ENCODE measurements at regions of chr2 and their contacts with region 1.

Region 1: DNA sequence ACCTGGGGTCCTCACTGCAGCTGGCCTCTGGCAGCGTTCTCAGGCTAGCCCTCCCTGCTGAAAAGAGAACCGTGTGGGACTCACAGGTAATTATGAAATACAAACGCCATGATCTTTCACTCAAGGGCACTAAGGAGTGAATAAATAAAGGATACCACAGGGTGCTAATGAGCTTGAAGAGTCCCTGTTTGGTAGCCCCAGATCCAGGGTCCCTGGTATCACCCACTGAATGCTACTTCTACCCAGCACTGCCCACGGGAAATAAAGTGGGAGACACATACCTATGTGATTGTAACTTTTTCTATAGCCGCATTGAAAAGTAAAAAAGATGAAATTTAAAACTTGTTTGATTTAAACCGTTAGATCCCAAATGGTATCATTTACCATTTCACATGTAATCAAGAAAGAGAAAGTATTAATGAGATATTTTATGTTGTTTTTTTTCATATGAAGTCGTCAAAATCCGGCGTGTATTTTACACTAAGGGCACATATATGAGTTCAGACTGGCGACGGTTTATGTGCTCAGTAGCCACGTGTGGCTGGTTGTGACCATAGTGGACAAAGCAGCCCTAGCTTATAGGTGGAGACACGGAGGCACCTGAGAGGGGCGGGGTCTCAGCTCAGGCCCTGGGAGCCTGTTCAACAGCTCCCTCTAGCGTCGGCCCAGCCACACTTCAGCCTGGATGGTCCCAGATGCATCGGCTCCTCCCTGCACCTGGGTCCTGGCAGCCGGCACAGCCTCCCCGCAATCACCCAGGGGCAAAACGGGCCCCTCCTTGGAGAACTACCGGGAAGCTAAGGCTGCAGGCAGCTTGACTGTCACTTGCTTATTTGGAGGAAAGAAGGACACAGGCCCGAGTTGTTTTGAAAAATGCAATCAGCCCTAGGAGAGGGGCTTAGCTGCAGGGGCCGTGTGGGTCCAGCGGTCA is 39.2 kb downstream of the ODC1 start:
- DNase-seq: peak; percentile 89
- ATAC-seq: peak; percentile 79
- H3K4me3 Mint-ChIP-seq: peak overlapping the region; percentile 43
- H3K27ac Mint-ChIP-seq: peak overlapping the region; percentile 85
- H3K4me1 Mint-ChIP-seq: peaks cover 36% of the 10 kb centered on the region
- H3K27me3 Mint-ChIP-seq: no peaks in the 10 kb centered on the region

Region 2: GRCh38 chr2:10072656-10073480 is 336.0 kb before region 1 on chr2:
- CTCF ChIA-PET with region 1: interaction called, 37 read pairs
- DNase-seq: peak; percentile 86
- ATAC-seq: peak; percentile 95
- H3K4me3 Mint-ChIP-seq: no peak overlapping the region
- H3K27ac Mint-ChIP-seq: no peak overlapping the region
- H3K4me1 Mint-ChIP-seq: peaks cover 16% of the 10 kb centered on the region
- H3K27me3 Mint-ChIP-seq: peaks cover 51% of the 10 kb centered on the region

Region 3: DNA sequence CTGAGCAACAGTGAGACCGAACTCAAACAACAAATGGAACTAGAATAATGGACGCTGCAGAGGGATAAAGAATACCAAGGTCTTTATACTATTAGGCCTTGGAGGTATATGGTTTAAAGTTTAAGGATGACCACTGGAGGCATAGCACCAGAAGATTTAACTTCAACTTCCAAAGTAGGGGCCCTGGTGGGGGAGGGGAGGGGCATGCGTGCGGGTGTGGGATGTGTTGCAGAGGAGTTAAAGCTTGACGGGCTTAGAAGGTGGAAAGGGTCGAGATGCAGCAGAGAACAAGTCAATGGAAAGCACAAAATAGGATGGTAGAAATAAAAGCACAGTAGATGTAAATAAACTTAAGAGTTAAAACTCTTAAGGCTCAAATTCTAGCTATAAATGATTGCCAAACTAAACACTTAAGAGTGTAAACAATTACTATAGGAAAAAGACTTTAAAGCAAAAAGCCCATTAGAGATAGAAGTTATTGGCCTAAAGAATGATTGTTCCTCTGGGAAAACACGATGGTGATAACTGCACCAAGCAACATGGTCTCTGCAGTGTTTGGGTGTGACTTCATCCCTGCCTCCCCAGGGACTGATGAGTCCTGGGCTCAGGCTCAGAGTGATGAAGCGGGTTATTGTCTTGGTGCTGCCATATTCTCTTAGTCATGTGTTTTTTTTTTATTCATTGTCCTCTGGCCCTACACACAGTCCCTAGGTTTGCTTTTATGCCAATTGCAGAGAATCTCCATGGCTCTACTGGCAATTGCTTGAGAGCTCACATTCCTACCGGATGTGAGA is 273.4 kb before region 1 on chr2:
- CTCF ChIA-PET with region 1: interaction called, 36 read pairs
- DNase-seq: no peak
- ATAC-seq: no peak
- H3K4me3 Mint-ChIP-seq: no peak overlapping the region
- H3K27ac Mint-ChIP-seq: peak overlapping the region; percentile 56
- H3K4me1 Mint-ChIP-seq: peaks cover 32% of the 10 kb centered on the region
- H3K27me3 Mint-ChIP-seq: no peaks in the 10 kb centered on the region

Region 4: DNA sequence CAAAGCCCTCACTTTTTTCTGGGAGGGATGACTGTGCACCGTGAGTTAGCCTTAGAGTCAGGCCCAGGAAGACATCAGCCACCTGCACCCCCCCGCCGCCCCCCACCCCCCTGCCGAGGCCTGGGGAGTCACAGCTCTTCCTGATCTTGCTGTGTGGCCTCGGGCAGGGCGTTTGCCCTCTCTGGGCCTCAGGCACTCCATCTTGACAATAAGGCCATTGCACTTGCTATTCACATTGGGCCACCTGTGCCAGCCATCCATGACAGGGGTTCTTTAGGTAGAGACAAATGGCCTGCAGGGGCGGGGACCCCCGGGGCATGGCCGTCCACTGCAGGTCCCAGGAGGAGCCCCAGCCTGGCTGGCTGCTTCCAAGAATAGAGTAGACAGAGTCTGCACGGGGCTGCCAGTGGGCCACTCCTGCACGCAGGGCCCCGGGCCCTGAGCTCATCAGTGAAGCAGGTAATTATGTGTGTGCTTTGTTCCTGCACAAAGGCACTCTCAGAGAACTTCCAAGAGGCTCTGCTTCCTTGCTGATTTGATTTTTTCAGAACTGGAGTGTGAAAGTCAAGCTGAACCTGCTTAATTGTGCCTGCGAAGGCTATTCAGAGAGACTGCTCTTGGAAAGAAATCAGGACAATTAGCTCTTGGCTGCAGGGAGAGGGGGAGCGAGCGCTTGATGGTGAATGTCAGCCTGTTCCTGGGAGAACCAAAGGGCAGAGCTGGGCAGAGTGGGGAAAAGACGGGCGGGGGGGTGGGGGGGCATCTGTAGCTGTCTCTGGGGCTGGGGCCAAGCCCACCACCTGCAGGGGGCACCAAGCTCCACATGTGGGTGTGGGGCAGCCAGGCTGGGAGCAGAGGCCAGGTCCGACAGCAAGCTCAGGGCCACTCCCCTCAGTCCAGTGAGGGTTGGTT is 246.1 kb before region 1 on chr2:
- CTCF ChIA-PET with region 1: interaction called, 21 read pairs
- DNase-seq: no peak
- ATAC-seq: no peak
- H3K4me3 Mint-ChIP-seq: no peak overlapping the region
- H3K27ac Mint-ChIP-seq: no peak overlapping the region
- H3K4me1 Mint-ChIP-seq: peaks cover 20% of the 10 kb centered on the region
- H3K27me3 Mint-ChIP-seq: no peaks in the 10 kb centered on the region

Region 5: GRCh38 chr2:10278029-10278762 is 130.7 kb before region 1 on chr2:
- CTCF ChIA-PET with region 1: interaction called, 15 read pairs
- DNase-seq: peak; percentile 66
- ATAC-seq: peak; percentile 67
- H3K4me3 Mint-ChIP-seq: no peak overlapping the region
- H3K27ac Mint-ChIP-seq: peak overlapping the region; percentile 52
- H3K4me1 Mint-ChIP-seq: peaks cover 24% of the 10 kb centered on the region
- H3K27me3 Mint-ChIP-seq: no peaks in the 10 kb centered on the region

Region 6: DNA sequence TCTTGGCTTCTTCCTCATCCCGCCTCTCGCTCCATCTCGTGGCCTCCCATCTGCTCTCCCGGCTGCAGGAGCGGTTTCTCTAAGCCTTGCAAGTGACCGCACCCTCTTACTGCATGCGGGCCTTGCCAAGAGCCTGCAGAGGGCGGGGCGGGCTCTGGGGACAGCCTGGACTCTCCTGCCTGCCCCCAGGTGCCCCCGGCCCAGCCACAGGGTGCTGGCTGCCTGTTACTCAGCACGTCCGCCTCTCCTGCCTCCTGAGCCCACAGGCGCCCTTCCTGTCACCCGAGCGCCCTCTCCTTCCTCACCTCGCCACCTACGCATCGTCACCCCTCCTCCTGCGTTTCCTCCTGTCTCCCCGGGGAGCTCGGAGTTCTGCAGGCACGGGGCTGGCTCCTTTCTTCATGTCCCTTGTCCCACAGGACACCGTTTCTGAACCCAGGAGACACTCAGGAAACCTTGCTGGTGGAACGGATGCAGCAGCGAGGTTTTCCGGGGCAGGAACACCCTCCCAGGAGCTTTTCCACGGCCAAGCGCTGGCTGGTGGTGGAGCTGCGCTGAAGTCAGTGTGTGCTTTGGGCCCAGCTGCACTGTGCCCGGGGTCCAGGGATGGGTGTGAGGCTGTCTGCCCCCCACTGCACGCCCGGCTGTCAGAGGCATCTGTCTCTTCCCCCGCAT is 77.8 kb before region 1 on chr2:
- CTCF ChIA-PET with region 1: interaction called, 47 read pairs
- DNase-seq: peak; percentile 87
- ATAC-seq: peak; percentile 83
- H3K4me3 Mint-ChIP-seq: peak overlapping the region; percentile 82
- H3K27ac Mint-ChIP-seq: peak overlapping the region; percentile 87
- H3K4me1 Mint-ChIP-seq: peaks cover 52% of the 10 kb centered on the region
- H3K27me3 Mint-ChIP-seq: no peaks in the 10 kb centered on the region

Region 7: GRCh38 chr2:10448208-10448645 is 39.3 kb after region 1 on chr2 and contains the start of gene ODC1:
- CTCF ChIA-PET with region 1: interaction called, 23 read pairs
- DNase-seq: peak; percentile 96
- ATAC-seq: peak; percentile 83
- H3K4me3 Mint-ChIP-seq: peak within 1 kb of the TSS; percentile 82
- H3K27ac Mint-ChIP-seq: peak within 1 kb of the TSS; percentile 86
- H3K4me1 Mint-ChIP-seq: peaks cover 42% of the 10 kb centered on the region
- H3K27me3 Mint-ChIP-seq: no peaks in the 10 kb centered on the region
- total RNA-seq, gene ODC1: 64.8 to 80.3 TPM

Region 8: GRCh38 chr2:10467401-10467800 is 58.5 kb after region 1 on chr2:
- CTCF ChIA-PET with region 1: no interaction called
- DNase-seq: no peak
- ATAC-seq: no peak
- H3K4me3 Mint-ChIP-seq: no peak overlapping the region
- H3K27ac Mint-ChIP-seq: no peak overlapping the region
- H3K4me1 Mint-ChIP-seq: no peaks in the 10 kb centered on the region
- H3K27me3 Mint-ChIP-seq: peaks cover 7% of the 10 kb centered on the region